ENCODE measurements at regions of chr17 and their contacts with region 1.

Region 1: DNA sequence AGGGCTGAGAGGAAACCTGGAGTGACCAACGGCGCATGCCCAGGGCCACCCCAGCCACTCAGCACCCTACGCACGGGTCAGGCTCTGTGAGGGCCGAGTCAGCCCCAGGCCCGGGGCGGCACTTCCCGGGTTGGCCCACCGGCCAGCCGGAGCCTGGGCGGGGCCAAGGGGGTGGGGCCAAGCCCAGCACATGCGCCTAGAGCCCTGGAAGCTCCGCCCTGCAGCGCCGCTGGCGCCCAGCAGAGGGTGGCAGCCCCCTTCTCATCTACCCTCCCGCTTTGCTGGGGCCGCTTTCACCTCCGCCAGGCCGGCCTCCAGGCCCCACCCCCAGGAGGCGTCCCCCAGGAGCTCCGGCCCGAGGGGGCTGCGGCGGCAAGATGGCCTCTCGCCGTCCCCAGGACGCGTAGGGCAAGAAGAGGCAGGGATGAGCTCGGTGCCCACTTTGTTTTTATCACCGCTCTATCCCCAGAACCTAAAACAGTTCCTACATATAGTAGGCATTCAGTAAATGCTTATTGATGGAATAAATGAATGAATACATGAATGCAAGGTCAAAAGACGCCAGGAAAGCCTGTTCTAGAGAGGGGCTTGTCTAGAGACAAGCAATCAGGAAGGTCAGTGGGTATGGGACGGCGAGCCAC is 31.3 kb downstream of the MYO18A start:
- DNase-seq: peak; percentile 96
- ATAC-seq: peak; percentile 95
- H3K4me3 Mint-ChIP-seq: peak overlapping the region; percentile 83
- H3K27ac Mint-ChIP-seq: peak overlapping the region; percentile 89
- H3K4me1 Mint-ChIP-seq: peaks cover 45% of the 10 kb centered on the region
- H3K27me3 Mint-ChIP-seq: no peaks in the 10 kb centered on the region
- CTCF ChIP-seq: peak; percentile 27

Region 2: GRCh38 chr17:28467456-28468025 is 681.4 kb before region 1 on chr17:
- CTCF ChIA-PET with region 1: no interaction called
- POLR2A ChIA-PET with region 1: no interaction called
- intact Hi-C with region 1: no loop called
- DNase-seq: no peak
- ATAC-seq: no peak
- H3K4me3 Mint-ChIP-seq: no peak overlapping the region
- H3K27ac Mint-ChIP-seq: no peak overlapping the region
- H3K4me1 Mint-ChIP-seq: no peaks in the 10 kb centered on the region
- H3K27me3 Mint-ChIP-seq: peaks cover 24% of the 10 kb centered on the region
- CTCF ChIP-seq: no peak

Region 3: DNA sequence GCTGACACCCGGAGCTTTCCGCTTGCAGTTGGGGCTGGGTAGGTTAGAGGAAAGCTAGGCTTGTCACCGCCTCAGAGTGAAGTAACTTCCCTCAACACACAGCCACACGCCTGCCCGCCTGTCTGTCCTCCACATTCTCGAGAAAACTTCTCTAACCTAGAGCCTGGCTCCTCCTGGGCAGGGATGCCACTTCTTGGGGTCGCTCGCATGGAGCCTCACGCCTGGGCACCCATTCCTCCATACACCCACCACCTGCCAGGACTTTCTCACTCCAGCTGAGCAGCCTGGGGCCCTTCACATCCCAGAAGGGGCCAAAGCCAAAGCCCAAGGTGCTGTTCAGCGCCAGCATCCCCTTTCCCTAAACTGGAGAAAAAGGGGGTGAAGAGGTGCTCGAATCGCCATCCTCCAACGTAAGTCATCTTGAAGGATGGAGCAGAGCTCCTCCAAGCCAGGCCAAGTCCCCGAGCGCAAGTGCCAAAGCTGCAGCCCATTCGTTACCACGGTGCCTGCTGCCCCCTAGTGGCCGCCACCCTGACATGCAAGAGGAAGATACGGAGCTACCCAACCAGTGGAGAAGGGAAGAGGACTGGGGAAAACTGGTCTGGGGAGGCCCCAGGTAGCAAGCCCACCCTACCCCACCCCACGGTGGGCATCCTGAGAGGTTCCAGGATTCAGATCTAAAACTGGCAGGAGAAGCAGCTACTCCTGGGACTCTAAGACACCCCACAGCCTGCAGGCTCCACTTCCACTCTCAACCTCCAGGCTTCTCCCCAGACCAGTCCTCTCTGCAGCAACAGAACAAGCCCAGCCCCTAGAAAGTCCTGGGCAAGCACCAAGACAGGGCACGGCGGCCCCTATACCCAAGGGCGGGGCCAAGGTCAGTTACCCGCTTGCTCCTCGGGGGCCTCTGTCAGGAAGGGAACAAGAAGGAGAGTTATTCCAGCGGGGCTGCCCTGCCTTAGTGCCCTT is 31.8 kb before region 1 on chr17:
- CTCF ChIA-PET with region 1: interaction called, 61 read pairs
- POLR2A ChIA-PET with region 1: no interaction called
- intact Hi-C with region 1: no loop called
- DNase-seq: peak; percentile 63
- ATAC-seq: peak; percentile 83
- H3K4me3 Mint-ChIP-seq: no peak overlapping the region
- H3K27ac Mint-ChIP-seq: no peak overlapping the region
- H3K4me1 Mint-ChIP-seq: peaks cover 7% of the 10 kb centered on the region
- H3K27me3 Mint-ChIP-seq: no peaks in the 10 kb centered on the region
- CTCF ChIP-seq: peak; percentile 29

Region 4: GRCh38 chr17:29180034-29180787 is 31.3 kb after region 1 on chr17 and contains the start of gene MYO18A:
- CTCF ChIA-PET with region 1: interaction called, 201 read pairs
- POLR2A ChIA-PET with region 1: interaction called, 63 read pairs
- intact Hi-C with region 1: loop called (anchors 1 kb)
- DNase-seq: peak; percentile 80
- ATAC-seq: peak; percentile 98
- H3K4me3 Mint-ChIP-seq: peak within 1 kb of the TSS; percentile 57
- H3K27ac Mint-ChIP-seq: no peak within 1 kb of the TSS
- H3K4me1 Mint-ChIP-seq: peaks cover 13% of the 10 kb centered on the region
- H3K27me3 Mint-ChIP-seq: peaks cover 9% of the 10 kb centered on the region
- CTCF ChIP-seq: no peak
- total RNA-seq, gene MYO18A: 67.8 and 79.8 TPM in 2 replicates

Region 5: DNA sequence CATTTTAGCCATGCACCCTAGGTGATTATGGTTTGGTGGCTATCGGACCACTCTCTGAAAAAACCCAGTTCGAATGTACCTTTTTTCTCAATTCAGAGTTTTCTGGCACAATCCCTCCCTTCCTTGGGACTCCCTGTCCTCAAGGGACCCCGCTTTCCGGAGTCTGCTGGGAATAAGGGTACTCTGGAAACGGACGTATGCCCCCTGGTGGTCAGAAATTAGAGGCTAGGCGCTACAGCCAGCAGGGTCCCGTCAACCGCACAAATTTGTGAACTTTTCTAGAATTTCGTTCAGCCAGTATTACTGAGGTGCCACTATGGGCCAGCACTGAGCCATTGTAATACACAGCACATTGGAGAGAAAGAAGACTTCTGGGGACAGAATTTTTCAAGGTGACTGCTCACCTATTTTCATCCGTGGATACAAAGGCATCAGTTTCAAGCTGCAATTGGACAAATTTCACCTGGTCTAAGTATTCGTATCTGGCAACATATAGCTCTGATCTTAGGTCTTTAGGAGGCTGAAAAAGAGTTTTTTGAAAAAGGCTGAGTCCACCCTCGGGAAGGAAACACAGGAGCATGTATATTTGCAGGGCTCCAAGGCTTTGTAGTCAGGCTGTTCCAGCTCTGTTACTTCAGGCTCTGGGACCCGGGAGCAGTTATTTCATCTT is 70.6 kb after region 1 on chr17:
- CTCF ChIA-PET with region 1: interaction called, 194 read pairs
- POLR2A ChIA-PET with region 1: interaction called, 22 read pairs
- intact Hi-C with region 1: loop called (anchors 1 kb)
- DNase-seq: peak; percentile 52
- ATAC-seq: peak; percentile 88
- H3K4me3 Mint-ChIP-seq: no peak overlapping the region
- H3K27ac Mint-ChIP-seq: no peak overlapping the region
- H3K4me1 Mint-ChIP-seq: peaks cover 8% of the 10 kb centered on the region
- H3K27me3 Mint-ChIP-seq: peaks cover 2% of the 10 kb centered on the region
- CTCF ChIP-seq: peak; percentile 20

Region 6: GRCh38 chr17:29389982-29390850 is 241.3 kb after region 1 on chr17 and contains the start of gene TAOK1:
- CTCF ChIA-PET with region 1: no interaction called
- POLR2A ChIA-PET with region 1: no interaction called
- intact Hi-C with region 1: loop called (anchors 10 kb)
- DNase-seq: peak; percentile 95
- ATAC-seq: peak; percentile 95
- H3K4me3 Mint-ChIP-seq: peak within 1 kb of the TSS; percentile 91
- H3K27ac Mint-ChIP-seq: peak within 1 kb of the TSS; percentile 93
- H3K4me1 Mint-ChIP-seq: peaks cover 41% of the 10 kb centered on the region
- H3K27me3 Mint-ChIP-seq: no peaks in the 10 kb centered on the region
- CTCF ChIP-seq: no peak
- total RNA-seq, gene TAOK1: 55.1 and 55.5 TPM in 2 replicates

Region 7: GRCh38 chr17:29617125-29617480 is 468.2 kb after region 1 on chr17:
- CTCF ChIA-PET with region 1: no interaction called
- POLR2A ChIA-PET with region 1: interaction called, 4 read pairs
- intact Hi-C with region 1: loop called (anchors 10 kb)
- DNase-seq: peak; percentile 75
- ATAC-seq: peak; percentile 79
- H3K4me3 Mint-ChIP-seq: peak overlapping the region; percentile 83
- H3K27ac Mint-ChIP-seq: peak overlapping the region; percentile 72
- H3K4me1 Mint-ChIP-seq: peaks cover 46% of the 10 kb centered on the region
- H3K27me3 Mint-ChIP-seq: peaks cover 3% of the 10 kb centered on the region
- CTCF ChIP-seq: no peak